ENCODE measurements at regions of chr12 and their contacts with region 1.

Region 1: GRCh38 chr12:9731797-9732196 is 1.1 kb downstream of the CLECL1 start:
- DNase-seq: no peak
- ATAC-seq: no peak
- H3K4me3 ChIP-seq: no peak overlapping the region
- H3K4me3 Mint-ChIP-seq: peak overlapping the region; percentile 18
- H3K27ac ChIP-seq: no peak overlapping the region
- H3K27ac Mint-ChIP-seq: no peak overlapping the region
- H3K4me1 ChIP-seq: peaks cover 5% of the 10 kb centered on the region
- H3K4me1 Mint-ChIP-seq: peaks cover 21% of the 10 kb centered on the region
- H3K27me3 ChIP-seq: no peaks in the 10 kb centered on the region
- H3K27me3 Mint-ChIP-seq: peaks cover 1% of the 10 kb centered on the region
- CTCF ChIP-seq: no peak

Region 2: GRCh38 chr12:8697476-8698131 is 1034.2 kb before region 1 on chr12 and contains the start of gene RIMKLB:
- CTCF ChIA-PET with region 1: no interaction called
- POLR2A ChIA-PET with region 1: no interaction called
- intact Hi-C with region 1: loop called in 1 of 2 experiments (anchors 10 kb)
- DNase-seq: peak; percentile 55 to 91 (median 79)
- ATAC-seq: peak; percentile 85
- H3K4me3 ChIP-seq: peak within 1 kb of the TSS; percentile 80 to 95
- H3K4me3 Mint-ChIP-seq: peak within 1 kb of the TSS; percentile 96
- H3K27ac ChIP-seq: peak within 1 kb of the TSS; percentile 68 to 69
- H3K27ac Mint-ChIP-seq: peak within 1 kb of the TSS; percentile 91
- H3K4me1 ChIP-seq: peaks cover 17% of the 10 kb centered on the region
- H3K4me1 Mint-ChIP-seq: peaks cover 32% of the 10 kb centered on the region
- H3K27me3 ChIP-seq: no peaks in the 10 kb centered on the region
- H3K27me3 Mint-ChIP-seq: no peaks in the 10 kb centered on the region
- CTCF ChIP-seq: no peak
- total RNA-seq, gene RIMKLB: 10.1 to 12.2 TPM

Region 3: GRCh38 chr12:9662500-9662899 is 69.3 kb before region 1 on chr12:
- CTCF ChIA-PET with region 1: no interaction called
- POLR2A ChIA-PET with region 1: no interaction called
- intact Hi-C with region 1: no loop called
- DNase-seq: peak in 1 of 9 experiments; percentile 38
- ATAC-seq: peak; percentile 44
- H3K4me3 ChIP-seq: no peak overlapping the region
- H3K4me3 Mint-ChIP-seq: peak overlapping the region; percentile 53
- H3K27ac ChIP-seq: peak overlapping the region in 1 of 2 experiments; percentile 52
- H3K27ac Mint-ChIP-seq: peak overlapping the region; percentile 88
- H3K4me1 ChIP-seq: peaks cover 83% of the 10 kb centered on the region
- H3K4me1 Mint-ChIP-seq: peaks cover 91% of the 10 kb centered on the region
- H3K27me3 ChIP-seq: no peaks in the 10 kb centered on the region
- H3K27me3 Mint-ChIP-seq: no peaks in the 10 kb centered on the region
- CTCF ChIP-seq: no peak

Region 4: DNA sequence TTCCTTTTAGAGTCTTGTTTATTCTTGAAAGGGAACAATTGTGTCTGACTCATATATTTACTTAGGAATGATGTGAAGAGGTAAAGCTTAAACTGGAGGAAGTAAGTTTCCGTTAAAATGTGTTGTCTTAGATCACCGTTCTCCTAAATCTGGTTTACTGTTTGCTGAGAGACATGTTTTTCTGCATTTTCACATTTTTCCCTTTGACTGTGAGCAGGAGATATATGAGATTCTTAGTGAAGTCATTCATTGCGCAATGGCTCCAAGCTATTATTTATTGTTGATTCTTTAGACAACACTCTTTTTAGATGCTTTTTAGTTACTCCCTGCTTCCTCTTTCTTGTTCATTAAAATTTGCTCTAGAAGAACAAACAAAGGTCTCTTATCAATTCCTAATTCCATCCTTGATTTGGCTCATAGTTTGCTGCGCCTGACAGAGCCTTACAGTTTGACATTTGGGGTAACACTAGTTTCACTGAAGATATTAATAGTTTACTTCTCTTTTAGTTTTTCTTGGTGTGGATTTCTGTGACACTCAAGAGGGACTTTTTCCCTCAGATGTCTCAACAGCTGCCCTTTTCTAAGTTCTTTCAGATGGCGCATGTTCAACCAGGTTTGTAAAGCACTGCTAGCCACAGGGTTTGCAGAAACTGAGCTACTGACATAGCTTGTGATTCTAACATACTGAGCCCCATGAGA is 10.3 kb before region 1 on chr12:
- CTCF ChIA-PET with region 1: interaction called, 3 read pairs
- POLR2A ChIA-PET with region 1: interaction called, 3 read pairs
- intact Hi-C with region 1: loop called in 1 of 2 experiments (anchors 2 kb)
- DNase-seq: no peak
- ATAC-seq: no peak
- H3K4me3 ChIP-seq: no peak overlapping the region
- H3K4me3 Mint-ChIP-seq: no peak overlapping the region
- H3K27ac ChIP-seq: no peak overlapping the region
- H3K27ac Mint-ChIP-seq: no peak overlapping the region
- H3K4me1 ChIP-seq: no peaks in the 10 kb centered on the region
- H3K4me1 Mint-ChIP-seq: peaks cover 6% of the 10 kb centered on the region
- H3K27me3 ChIP-seq: peaks cover 0 to 4% of the 10 kb centered on the region in 2 experiments
- H3K27me3 Mint-ChIP-seq: no peaks in the 10 kb centered on the region
- CTCF ChIP-seq: no peak